Activated CD4-positive, alpha-beta T cell treated with anti-CD3 and anti-CD28 coated beads for 36 hours (primary cell): ENCODE measurements at regions of chr1 and their contacts with region 1.

Region 1: DNA sequence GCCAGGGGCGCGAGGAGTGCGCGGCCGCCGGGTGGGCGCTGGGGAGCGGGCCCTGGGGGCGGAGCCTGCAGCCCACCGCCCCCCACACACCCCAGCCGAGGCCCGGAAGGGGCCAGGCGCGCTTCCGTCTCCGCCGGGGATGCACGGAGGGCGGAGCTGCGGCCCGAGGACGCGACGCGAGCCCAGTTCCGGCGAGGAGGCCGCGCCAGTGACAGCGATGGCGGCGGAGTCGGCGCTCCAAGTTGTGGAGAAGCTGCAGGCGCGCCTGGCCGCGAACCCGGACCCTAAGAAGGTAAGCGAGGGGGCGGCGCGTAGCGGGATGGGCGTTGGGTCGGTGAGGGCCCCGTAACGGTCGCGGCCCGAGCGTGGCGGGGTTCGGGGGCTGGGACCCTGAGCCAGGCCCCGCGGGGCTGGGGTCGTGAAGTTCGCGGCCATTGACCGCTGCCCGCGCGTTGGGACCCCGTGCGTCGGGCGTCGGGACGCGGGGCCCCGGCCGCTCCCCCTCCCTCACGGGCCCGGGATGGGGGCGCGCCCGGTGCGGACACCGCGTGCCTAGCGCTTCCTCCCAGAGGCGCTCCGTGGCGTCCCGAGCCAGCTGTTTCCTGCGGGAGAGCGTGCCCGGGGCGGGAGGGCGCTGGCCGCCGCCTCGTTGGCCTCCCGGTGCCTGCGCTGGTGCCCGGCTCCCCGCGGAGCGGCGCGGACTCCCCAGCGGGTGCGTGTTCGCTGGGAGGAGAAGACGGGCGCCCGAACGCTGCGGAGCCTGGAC is at the start of gene ELOA:
- DNase-seq: peak; percentile 88
- ATAC-seq: peak; percentile 94
- H3K4me3 Mint-ChIP-seq: peak within 1 kb of the TSS; percentile 87
- H3K27ac Mint-ChIP-seq: peak within 1 kb of the TSS; percentile 91
- H3K4me1 Mint-ChIP-seq: peaks cover 42% of the 10 kb centered on the region
- H3K27me3 Mint-ChIP-seq: no peaks in the 10 kb centered on the region
- total RNA-seq, gene ELOA: 34.5 to 38.6 TPM

Region 2: DNA sequence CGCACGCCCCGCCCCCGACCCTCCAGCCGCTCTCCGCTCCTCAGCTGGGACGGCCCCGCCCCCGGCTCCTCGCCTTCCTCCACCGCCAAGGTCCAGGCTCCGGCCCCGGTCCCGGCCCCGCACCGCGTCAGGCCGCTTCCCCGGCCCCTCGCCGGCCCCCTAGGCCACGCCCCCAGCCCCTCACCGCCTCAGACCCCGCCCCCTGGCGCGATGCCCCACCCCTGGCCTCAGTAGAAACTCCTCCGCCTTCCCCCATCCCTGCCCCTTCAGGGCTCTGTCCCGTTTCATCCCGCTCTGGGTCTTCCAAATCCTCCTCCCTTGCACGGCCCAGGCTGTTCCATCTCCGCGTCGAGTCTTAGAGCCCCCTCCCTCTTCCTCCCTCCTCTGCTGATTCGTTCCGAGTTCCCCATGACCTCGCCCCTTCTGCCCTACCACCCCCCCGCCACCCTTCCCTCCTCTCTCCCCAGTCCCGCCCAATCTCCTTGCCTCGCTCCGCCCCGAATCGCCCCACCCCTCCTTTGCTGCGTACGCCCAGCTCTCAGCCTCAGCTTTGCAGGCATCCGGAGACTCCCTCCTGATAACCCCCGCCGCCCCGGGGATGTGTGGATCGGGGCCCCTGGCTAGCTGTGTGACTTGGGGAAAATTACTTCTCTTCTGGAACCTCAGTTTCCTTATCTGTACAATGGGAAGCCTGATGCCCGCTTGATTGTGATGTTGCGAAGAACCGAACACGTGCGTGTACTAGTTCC is 259.0 kb before region 1 on chr1:
- CTCF ChIA-PET with region 1: no interaction called
- POLR2A ChIA-PET with region 1: no interaction called
- intact Hi-C with region 1: loop called in 1 of 2 experiments (anchors 1 kb)
- DNase-seq: peak; percentile 95
- ATAC-seq: peak; percentile 94
- H3K4me3 Mint-ChIP-seq: peak overlapping the region; percentile 79
- H3K27ac Mint-ChIP-seq: peak overlapping the region; percentile 33
- H3K4me1 Mint-ChIP-seq: peaks cover 20% of the 10 kb centered on the region
- H3K27me3 Mint-ChIP-seq: peaks cover 18% of the 10 kb centered on the region

Region 3: GRCh38 chr1:23559136-23559984 is 184.1 kb before region 1 on chr1 and contains the start of gene ID3:
- CTCF ChIA-PET with region 1: no interaction called
- POLR2A ChIA-PET with region 1: no interaction called
- intact Hi-C with region 1: loop called in 1 of 2 experiments (anchors 2 kb)
- DNase-seq: peak; percentile 96
- ATAC-seq: peak; percentile 71
- H3K4me3 Mint-ChIP-seq: peak within 1 kb of the TSS; percentile 94
- H3K27ac Mint-ChIP-seq: peak within 1 kb of the TSS; percentile 79
- H3K4me1 Mint-ChIP-seq: peaks cover 58% of the 10 kb centered on the region
- H3K27me3 Mint-ChIP-seq: peaks cover 5% of the 10 kb centered on the region
- total RNA-seq, gene ID3: 42.6 to 43.9 TPM

Region 4: DNA sequence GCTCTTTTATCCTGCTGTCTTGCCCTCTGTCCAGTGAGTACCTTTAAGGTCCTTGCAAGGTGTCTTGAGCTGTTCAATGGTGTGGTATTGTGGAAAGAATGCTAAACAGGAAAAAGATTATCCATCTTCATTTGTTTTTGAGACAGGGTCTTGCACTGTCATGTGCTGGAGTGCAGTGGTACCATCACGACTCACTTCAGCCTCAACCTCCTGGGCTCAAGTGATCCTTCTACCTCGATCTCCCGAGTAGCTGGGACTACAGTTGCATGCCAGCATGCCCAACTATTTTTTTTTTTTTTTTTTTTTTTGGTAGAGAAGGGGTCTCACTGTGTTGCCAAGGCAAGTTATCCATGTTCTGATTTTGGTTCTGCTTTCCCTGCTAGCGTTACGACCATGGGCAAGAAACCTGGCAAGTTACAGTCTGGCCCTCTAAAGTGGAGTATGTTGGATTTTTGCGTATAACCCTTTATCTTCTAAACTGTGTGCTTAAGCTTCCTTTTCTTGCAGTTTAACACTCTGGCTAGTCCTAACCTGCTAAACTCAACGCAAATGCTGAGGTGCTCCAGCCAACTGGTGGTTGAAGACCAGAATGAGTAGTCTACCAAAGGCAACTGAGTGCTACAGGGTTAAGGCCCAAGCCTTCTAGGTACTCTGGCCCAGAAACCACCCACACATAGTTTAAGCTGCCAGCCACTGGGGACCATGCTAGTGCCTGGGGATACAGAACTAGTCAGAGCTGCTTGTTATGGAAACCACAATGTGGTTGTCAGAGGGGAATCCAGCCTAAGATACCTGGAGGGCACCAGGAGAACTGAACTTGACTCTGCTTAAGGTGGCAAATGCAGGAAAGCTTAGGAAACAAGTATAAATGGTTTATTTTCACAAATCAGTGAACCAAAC is 43.9 kb before region 1 on chr1:
- CTCF ChIA-PET with region 1: interaction called, 5 read pairs
- POLR2A ChIA-PET with region 1: interaction called, 8 read pairs
- intact Hi-C with region 1: loop called in 1 of 2 experiments (anchors 2 kb)
- DNase-seq: peak; percentile 36
- ATAC-seq: peak; percentile 53
- H3K4me3 Mint-ChIP-seq: no peak overlapping the region
- H3K27ac Mint-ChIP-seq: peak overlapping the region; percentile 67
- H3K4me1 Mint-ChIP-seq: peaks cover 54% of the 10 kb centered on the region
- H3K27me3 Mint-ChIP-seq: no peaks in the 10 kb centered on the region

Region 5: DNA sequence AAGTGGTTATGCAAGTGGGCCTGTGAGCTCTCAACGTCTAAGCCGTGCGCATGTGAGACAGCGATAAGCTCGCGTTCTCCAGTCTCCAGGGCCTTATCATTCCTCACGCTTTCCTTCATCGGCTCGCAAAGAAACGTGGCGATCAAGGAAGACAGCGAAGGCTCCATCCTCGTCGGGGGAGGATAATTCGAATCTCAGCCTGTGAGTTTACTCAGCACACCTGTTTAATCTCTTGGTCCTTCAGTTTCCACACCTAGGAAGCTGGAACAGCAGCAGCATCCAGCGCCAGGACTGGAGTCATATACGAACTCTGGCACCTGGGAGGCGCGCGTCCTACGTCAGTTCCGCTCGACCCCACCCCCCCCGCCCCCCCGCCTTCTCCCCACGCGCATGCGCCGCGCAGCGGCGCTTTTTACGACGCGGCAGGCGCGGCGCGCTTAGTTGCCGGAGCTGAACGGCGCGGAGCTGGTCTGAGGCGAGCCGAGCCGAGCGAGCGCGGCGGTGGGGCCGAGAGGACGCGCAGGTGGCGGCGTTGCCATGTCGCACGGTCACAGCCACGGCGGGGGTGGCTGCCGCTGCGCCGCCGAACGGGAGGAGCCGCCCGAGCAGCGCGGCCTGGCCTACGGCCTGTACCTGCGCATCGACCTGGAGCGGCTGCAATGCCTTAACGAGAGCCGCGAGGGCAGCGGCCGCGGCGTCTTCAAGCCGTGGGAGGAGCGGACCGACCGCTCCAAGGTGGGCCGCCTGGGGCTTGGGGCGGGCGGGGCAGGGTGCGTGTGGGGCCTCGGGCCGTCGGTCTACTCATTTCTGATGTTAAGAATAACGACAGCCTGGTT is 34.7 kb after region 1 on chr1 and contains the start of gene PITHD1:
- CTCF ChIA-PET with region 1: interaction called, 5 read pairs
- POLR2A ChIA-PET with region 1: no interaction called
- intact Hi-C with region 1: loop called in 1 of 2 experiments (anchors 1 kb)
- DNase-seq: peak; percentile 90
- ATAC-seq: peak; percentile 87
- H3K4me3 Mint-ChIP-seq: peak within 1 kb of the TSS; percentile 87
- H3K27ac Mint-ChIP-seq: peak within 1 kb of the TSS; percentile 87
- H3K4me1 Mint-ChIP-seq: peaks cover 43% of the 10 kb centered on the region
- H3K27me3 Mint-ChIP-seq: no peaks in the 10 kb centered on the region
- total RNA-seq, gene PITHD1: 53.1 to 64.1 TPM

Region 6: GRCh38 chr1:23800400-23801337 is 57.2 kb after region 1 on chr1 and contains the start of gene GALE:
- CTCF ChIA-PET with region 1: no interaction called
- POLR2A ChIA-PET with region 1: no interaction called
- intact Hi-C with region 1: loop called in 1 of 2 experiments (anchors 1 kb)
- DNase-seq: peak; percentile 99
- ATAC-seq: peak; percentile 84
- H3K4me3 Mint-ChIP-seq: peak within 1 kb of the TSS; percentile 86
- H3K27ac Mint-ChIP-seq: peak within 1 kb of the TSS; percentile 84
- H3K4me1 Mint-ChIP-seq: peaks cover 13% of the 10 kb centered on the region
- H3K27me3 Mint-ChIP-seq: no peaks in the 10 kb centered on the region
- total RNA-seq, gene GALE: 27.4 to 35.6 TPM